PC-9 (cell line): ENCODE measurements at regions of chr11 and their contacts with region 1.

Region 1: GRCh38 chr11:79762279-79762921 is 321.6 kb upstream of the TENM4 start:
- DNase-seq: no peak
- H3K4me3 ChIP-seq: no peak overlapping the region
- H3K27ac ChIP-seq: no peak overlapping the region
- H3K4me1 ChIP-seq: no peaks in the 10 kb centered on the region
- H3K27me3 ChIP-seq: no peaks in the 10 kb centered on the region
- CTCF ChIP-seq: no peak

Region 2: GRCh38 chr11:79845002-79845709 is 82.8 kb after region 1 on chr11:
- CTCF ChIA-PET with region 1: interaction called, 12 read pairs
- POLR2A ChIA-PET with region 1: no interaction called
- intact Hi-C with region 1: no loop called
- DNase-seq: no peak
- H3K4me3 ChIP-seq: no peak overlapping the region
- H3K27ac ChIP-seq: no peak overlapping the region
- H3K4me1 ChIP-seq: no peaks in the 10 kb centered on the region
- H3K27me3 ChIP-seq: no peaks in the 10 kb centered on the region
- CTCF ChIP-seq: no peak

Region 3: GRCh38 chr11:79932612-79933011 is 170.2 kb after region 1 on chr11:
- CTCF ChIA-PET with region 1: no interaction called
- POLR2A ChIA-PET with region 1: interaction called, 14 read pairs
- intact Hi-C with region 1: no loop called
- DNase-seq: no peak
- H3K4me3 ChIP-seq: no peak overlapping the region
- H3K27ac ChIP-seq: no peak overlapping the region
- H3K4me1 ChIP-seq: no peaks in the 10 kb centered on the region
- H3K27me3 ChIP-seq: no peaks in the 10 kb centered on the region
- CTCF ChIP-seq: no peak

Region 4: DNA sequence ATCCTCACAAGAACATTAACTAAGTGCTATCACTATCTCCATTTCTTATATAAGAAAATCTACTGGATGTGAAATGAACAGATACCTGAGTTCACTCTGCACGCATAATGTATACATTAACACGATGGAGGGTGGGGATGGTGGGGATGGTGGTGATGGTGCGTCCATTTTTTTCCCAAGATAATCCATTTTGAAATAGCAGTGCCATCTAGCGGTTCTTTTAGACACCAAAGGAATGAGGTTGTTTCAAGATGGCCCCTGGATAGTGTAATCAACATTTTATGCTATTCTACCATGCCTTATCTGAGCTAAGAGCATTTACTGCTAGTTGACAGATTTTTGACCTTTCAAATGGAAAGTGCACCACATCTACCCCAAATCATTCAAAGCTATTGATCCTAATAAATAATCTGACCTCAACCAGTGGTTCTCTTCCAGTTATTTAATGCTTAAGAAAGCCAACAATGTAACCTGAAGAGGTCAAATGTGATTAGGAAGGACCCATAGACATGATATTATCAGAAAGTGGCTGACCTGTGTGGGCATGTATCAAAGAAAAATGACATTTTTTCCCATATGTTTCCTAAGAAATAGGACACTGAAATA is 393.1 kb after region 1 on chr11:
- CTCF ChIA-PET with region 1: no interaction called
- POLR2A ChIA-PET with region 1: no interaction called
- intact Hi-C with region 1: loop called (anchors 1 kb)
- DNase-seq: no peak
- H3K4me3 ChIP-seq: no peak overlapping the region
- H3K27ac ChIP-seq: no peak overlapping the region
- H3K4me1 ChIP-seq: no peaks in the 10 kb centered on the region
- H3K27me3 ChIP-seq: no peaks in the 10 kb centered on the region
- CTCF ChIP-seq: peak; percentile 67

Region 5: DNA sequence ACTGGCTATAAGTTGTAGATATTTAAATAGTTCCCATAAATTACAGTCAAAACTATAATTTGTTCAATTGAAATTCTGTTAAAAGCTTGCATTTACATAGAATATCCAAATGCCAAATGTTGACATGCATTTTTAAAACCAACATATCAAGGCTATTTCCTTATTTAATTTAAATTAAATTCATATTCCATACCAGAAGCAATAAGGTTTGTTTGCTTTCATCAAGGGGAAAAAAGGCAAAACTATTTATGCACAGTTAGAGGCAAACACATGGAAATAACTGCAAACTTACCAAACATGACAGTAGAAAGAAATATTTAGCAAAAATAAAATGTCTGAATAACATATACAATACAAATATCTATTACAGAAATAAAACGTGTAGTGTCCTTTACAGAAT is 1259.7 kb after region 1 on chr11:
- CTCF ChIA-PET with region 1: interaction called, 12 read pairs
- POLR2A ChIA-PET with region 1: no interaction called
- intact Hi-C with region 1: no loop called
- DNase-seq: no peak
- H3K4me3 ChIP-seq: no peak overlapping the region
- H3K27ac ChIP-seq: no peak overlapping the region
- H3K4me1 ChIP-seq: no peaks in the 10 kb centered on the region
- H3K27me3 ChIP-seq: no peaks in the 10 kb centered on the region
- CTCF ChIP-seq: no peak